ENCODE measurements at regions of chr5 and their contacts with region 1.

Region 1: DNA sequence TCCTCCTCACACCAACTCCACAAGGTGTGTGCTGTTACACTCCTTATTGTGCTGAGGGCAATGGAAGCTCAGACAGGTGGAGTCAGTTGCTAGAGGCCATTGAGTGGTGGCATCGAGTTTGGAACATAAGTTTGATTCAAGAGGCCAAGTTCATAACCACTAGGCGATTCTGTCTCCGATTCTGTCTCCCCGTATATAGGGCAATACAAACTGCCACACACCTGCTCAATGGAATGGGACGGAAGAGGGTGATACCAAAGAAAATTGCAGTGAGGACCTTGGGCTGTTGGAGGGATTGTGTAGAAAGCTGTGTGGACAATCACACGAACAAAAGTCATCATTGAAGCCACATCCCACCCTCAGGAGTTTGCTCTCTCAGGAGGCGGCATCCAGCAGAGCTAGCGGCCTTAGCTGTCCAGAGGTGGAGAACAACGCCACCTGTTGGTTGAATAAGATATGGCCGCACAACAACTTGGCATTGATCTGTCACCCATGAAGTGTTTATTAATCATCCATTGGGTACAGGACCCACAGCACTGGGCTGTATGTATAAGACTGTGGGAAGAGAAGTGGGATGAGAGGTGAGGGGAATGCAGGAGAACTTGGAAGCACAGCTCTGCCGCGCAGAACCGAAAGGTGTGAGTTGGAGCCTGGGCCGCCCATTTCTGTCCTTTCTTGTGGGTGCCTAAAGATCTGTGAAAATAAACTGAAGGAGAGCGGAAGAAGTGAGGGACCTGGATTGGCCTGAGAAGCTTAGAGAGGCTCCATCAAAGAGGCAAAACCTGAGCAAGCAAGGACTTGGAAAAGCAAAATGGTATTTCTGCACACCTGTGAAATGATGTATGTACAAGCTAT is 16.1 kb upstream of the NEUROG1 start:
- DNase-seq: peak; percentile 78 to 90
- H3K4me3 ChIP-seq: no peak overlapping the region
- H3K27ac ChIP-seq: no peak overlapping the region
- H3K4me1 ChIP-seq: no peaks in the 10 kb centered on the region
- H3K27me3 ChIP-seq: peaks cover 0 to 83% (median 8%) of the 10 kb centered on the region in 3 donors
- CTCF ChIP-seq: peak in 5 of 7 experiments; percentile 70 to 87 (median 83)
- EP300 ChIP-seq: no peak
- POLR2A ChIP-seq: no peak

Region 2: GRCh38 chr5:135462304-135462703 is 89.5 kb before region 1 on chr5:
- intact Hi-C with region 1: loop called (anchors 5 kb)
- DNase-seq: peak; percentile 52 to 81
- H3K4me3 ChIP-seq: no peak overlapping the region
- H3K27ac ChIP-seq: no peak overlapping the region
- H3K4me1 ChIP-seq: peaks cover 13 to 30% (median 27%) of the 10 kb centered on the region in 4 donors
- H3K27me3 ChIP-seq: peaks cover 0 to 44% (median 21%) of the 10 kb centered on the region in 3 donors
- CTCF ChIP-seq: peak in 2 of 7 experiments; percentile 18 to 30
- EP300 ChIP-seq: no peak
- POLR2A ChIP-seq: no peak

Measured in stomach (tissue), 19 donors.